Natural killer cell (primary cell): ENCODE measurements at regions of chr3 and their contacts with region 1.

Region 1: GRCh38 chr3:179147873-179148615 is at the start of gene PIK3CA:
- DNase-seq: peak; percentile 87 to 99
- ATAC-seq: peak; percentile 80 to 93 (median 85)
- H3K4me3 ChIP-seq: peak within 1 kb of the TSS; percentile 72
- H3K4me3 Mint-ChIP-seq: peak within 1 kb of the TSS; percentile 98
- H3K27ac ChIP-seq: peak within 1 kb of the TSS; percentile 85
- H3K27ac Mint-ChIP-seq: no peak within 1 kb of the TSS
- H3K4me1 ChIP-seq: no peaks in the 10 kb centered on the region
- H3K4me1 Mint-ChIP-seq: peaks cover 30 to 34% of the 10 kb centered on the region in 2 donors
- H3K27me3 ChIP-seq: peaks cover 2% of the 10 kb centered on the region
- H3K27me3 Mint-ChIP-seq: peaks cover 4 to 8% of the 10 kb centered on the region in 2 donors
- CTCF ChIP-seq: no peak
- total RNA-seq, gene PIK3CA: 37.1 to 40.9 (median 40.2) TPM

Region 2: DNA sequence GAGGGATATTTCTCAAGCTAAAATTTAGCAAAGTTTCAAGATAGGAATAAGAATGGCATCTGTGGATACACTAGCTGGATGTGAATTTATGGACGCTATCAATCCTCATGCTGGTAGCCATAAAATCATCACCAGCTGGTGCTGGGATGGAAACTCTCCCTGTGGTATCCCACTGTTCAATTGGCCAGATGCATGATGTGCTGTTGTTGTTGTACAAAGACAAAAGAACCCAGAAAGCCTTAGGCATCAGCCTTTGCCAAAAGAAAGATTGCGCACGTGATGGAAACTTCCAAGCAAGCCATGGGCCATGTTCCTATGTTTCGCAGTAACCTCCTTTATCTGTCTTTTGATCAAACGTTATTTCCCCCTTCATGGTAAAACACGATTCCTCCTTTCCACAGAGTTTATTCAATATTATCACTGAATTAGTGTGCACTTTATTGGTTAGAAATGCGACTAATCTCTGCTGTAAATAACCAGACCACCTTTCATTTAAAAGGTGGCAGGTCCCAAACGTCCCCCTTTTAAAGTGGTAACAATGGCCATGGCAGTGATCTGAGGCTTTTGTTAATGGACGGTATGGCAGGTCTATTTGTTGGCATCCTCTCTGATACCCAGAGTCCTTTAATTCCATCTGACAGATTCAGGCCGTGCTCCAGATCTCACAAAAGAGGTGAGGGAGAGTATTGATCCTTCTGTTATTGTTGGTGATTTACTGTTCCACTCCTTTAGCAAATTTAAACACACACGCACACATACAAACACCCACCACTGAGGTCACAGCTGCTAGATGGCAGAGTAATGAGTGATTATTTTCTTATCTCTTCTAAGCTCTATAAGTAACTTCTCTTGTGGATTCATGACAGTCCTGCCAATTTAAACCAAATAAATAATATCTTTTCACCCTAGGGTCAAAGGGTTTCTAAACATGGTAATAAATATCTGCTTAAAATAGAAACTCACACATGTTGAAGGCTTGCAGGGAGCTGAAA is 903.0 kb before region 1 on chr3:
- intact Hi-C with region 1: no loop called
- DNase-seq: no peak
- ATAC-seq: no peak
- H3K4me3 ChIP-seq: no peak overlapping the region
- H3K4me3 Mint-ChIP-seq: no peak overlapping the region
- H3K27ac ChIP-seq: no peak overlapping the region
- H3K27ac Mint-ChIP-seq: no peak overlapping the region
- H3K4me1 ChIP-seq: no peaks in the 10 kb centered on the region
- H3K4me1 Mint-ChIP-seq: no peaks in the 10 kb centered on the region
- H3K27me3 ChIP-seq: no peaks in the 10 kb centered on the region
- H3K27me3 Mint-ChIP-seq: peaks cover 0 to 12% of the 10 kb centered on the region in 2 donors
- CTCF ChIP-seq: no peak

Region 3: DNA sequence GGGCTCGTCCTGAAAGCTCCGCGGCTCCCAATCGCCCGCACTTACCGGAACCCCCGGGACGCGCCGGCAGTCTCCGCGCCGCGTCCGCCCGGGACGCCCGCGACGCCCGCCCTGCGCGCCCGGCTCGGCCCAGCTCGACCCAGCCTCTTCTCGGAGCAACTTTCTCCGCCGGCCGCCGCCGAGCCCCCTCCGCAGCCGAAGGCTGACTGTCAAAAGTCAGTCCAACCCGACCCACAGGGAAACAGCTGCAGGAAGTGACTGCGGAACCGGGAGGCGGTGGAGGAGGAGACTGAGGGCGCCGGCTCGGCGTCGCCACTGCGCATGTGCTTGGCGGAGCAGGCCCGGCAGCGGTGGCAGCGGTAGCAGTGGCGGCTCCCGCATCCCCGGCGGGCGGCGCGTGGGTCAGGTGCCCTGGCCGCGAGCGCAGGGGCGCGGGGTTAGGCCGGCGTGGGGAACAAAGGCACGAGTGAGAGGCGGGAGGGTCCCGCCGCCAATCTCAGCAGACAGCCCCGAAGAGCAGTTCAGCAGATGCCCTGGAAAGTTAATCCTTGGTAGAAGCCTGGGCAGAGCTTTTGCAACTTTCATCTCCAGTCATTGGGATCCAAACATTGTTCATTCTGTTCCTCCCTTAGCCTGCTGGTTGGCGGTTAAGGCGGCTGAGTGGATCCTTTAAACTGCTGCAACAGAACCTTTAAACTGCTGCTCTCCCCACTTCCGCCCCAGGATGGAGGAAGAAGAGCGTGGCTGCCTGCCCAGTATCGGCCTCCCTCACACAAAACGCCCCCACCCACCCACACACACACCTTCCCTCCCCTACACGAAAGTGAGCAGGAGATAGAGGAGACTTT is 76.3 kb before region 1 on chr3 and contains the start of gene ZMAT3:
- intact Hi-C with region 1: loop called (anchors 1 kb)
- DNase-seq: peak; percentile 73 to 92
- ATAC-seq: peak; percentile 83 to 87 (median 86)
- H3K4me3 ChIP-seq: peak within 1 kb of the TSS; percentile 66
- H3K4me3 Mint-ChIP-seq: peak within 1 kb of the TSS; percentile 92
- H3K27ac ChIP-seq: peak within 1 kb of the TSS; percentile 78
- H3K27ac Mint-ChIP-seq: peak within 1 kb of the TSS; percentile 74 to 80
- H3K4me1 ChIP-seq: peaks cover 14% of the 10 kb centered on the region
- H3K4me1 Mint-ChIP-seq: peaks cover 29 to 30% of the 10 kb centered on the region in 2 donors
- H3K27me3 ChIP-seq: no peaks in the 10 kb centered on the region
- H3K27me3 Mint-ChIP-seq: no peaks in the 10 kb centered on the region
- CTCF ChIP-seq: no peak
- total RNA-seq, gene ZMAT3: 22.5 to 32.9 (median 24.1) TPM

Region 4: DNA sequence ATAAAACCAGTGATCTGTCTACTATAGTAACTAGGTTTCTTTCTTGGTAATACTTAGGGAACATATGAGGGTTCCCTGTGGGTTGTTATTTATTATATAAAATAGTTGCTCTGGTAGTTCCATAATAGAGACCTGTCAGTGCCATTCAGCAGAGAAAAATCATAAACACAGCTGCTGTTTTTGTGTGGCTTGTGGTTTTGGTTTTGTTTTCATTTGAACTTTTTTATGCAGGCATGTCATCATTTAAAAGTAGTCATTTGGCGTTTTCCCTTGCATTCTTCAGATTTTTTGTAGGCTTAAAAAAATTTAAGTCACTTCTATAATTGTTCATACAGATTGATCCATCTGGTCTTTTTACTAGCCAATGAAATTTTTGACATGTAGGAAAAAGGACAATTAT is 48.1 kb after region 1 on chr3:
- intact Hi-C with region 1: loop called (anchors 1 kb)
- DNase-seq: peak in 1 of 2 donors; percentile 67
- ATAC-seq: peak; percentile 50 to 75 (median 58)
- H3K4me3 ChIP-seq: no peak overlapping the region
- H3K4me3 Mint-ChIP-seq: peak overlapping the region; percentile 42
- H3K27ac ChIP-seq: no peak overlapping the region
- H3K27ac Mint-ChIP-seq: peak overlapping the region; percentile 35 to 51
- H3K4me1 ChIP-seq: no peaks in the 10 kb centered on the region
- H3K4me1 Mint-ChIP-seq: peaks cover 51 to 56% of the 10 kb centered on the region in 2 donors
- H3K27me3 ChIP-seq: no peaks in the 10 kb centered on the region
- H3K27me3 Mint-ChIP-seq: no peaks in the 10 kb centered on the region
- CTCF ChIP-seq: no peak

Region 5: GRCh38 chr3:179322286-179323196 is 174.5 kb after region 1 on chr3 and contains the start of gene ZNF639:
- intact Hi-C with region 1: loop called (anchors 1 kb)
- DNase-seq: peak; percentile 85 to 95
- ATAC-seq: peak; percentile 88 to 96 (median 89)
- H3K4me3 ChIP-seq: peak within 1 kb of the TSS; percentile 98
- H3K4me3 Mint-ChIP-seq: peak within 1 kb of the TSS; percentile 90
- H3K27ac ChIP-seq: peak within 1 kb of the TSS; percentile 97
- H3K27ac Mint-ChIP-seq: peak within 1 kb of the TSS; percentile 92 to 94
- H3K4me1 ChIP-seq: peaks cover 17% of the 10 kb centered on the region
- H3K4me1 Mint-ChIP-seq: peaks cover 29% of the 10 kb centered on the region in 2 donors
- H3K27me3 ChIP-seq: no peaks in the 10 kb centered on the region
- H3K27me3 Mint-ChIP-seq: no peaks in the 10 kb centered on the region
- CTCF ChIP-seq: peak; percentile 80
- total RNA-seq, gene ZNF639: 51.8 to 54.5 (median 53.5) TPM

Region 6: GRCh38 chr3:179562591-179563270 is 414.7 kb after region 1 on chr3 and contains the start of gene ACTL6A:
- intact Hi-C with region 1: loop called (anchors 1 kb)
- DNase-seq: peak; percentile 95 to 98
- ATAC-seq: peak; percentile 91 to 97 (median 94)
- H3K4me3 ChIP-seq: peak within 1 kb of the TSS; percentile 84
- H3K4me3 Mint-ChIP-seq: peak within 1 kb of the TSS; percentile 93
- H3K27ac ChIP-seq: peak within 1 kb of the TSS; percentile 48
- H3K27ac Mint-ChIP-seq: peak within 1 kb of the TSS; percentile 85 to 90
- H3K4me1 ChIP-seq: peaks cover 7% of the 10 kb centered on the region
- H3K4me1 Mint-ChIP-seq: peaks cover 24 to 32% of the 10 kb centered on the region in 2 donors
- H3K27me3 ChIP-seq: no peaks in the 10 kb centered on the region
- H3K27me3 Mint-ChIP-seq: peaks cover 3% of the 10 kb centered on the region in 2 donors
- CTCF ChIP-seq: no peak
- total RNA-seq, gene ACTL6A: 23.1 to 29.9 (median 24.1) TPM